Activated CD4-positive, alpha-beta memory T cell treated with anti-CD3 and anti-CD28 coated beads, Interleukin-2, amount 10 ng/mL, durations not matched to agents 7 days and 5 days (primary cell): ENCODE measurements at regions of chr6 and their contacts with region 1.

Region 1: DNA sequence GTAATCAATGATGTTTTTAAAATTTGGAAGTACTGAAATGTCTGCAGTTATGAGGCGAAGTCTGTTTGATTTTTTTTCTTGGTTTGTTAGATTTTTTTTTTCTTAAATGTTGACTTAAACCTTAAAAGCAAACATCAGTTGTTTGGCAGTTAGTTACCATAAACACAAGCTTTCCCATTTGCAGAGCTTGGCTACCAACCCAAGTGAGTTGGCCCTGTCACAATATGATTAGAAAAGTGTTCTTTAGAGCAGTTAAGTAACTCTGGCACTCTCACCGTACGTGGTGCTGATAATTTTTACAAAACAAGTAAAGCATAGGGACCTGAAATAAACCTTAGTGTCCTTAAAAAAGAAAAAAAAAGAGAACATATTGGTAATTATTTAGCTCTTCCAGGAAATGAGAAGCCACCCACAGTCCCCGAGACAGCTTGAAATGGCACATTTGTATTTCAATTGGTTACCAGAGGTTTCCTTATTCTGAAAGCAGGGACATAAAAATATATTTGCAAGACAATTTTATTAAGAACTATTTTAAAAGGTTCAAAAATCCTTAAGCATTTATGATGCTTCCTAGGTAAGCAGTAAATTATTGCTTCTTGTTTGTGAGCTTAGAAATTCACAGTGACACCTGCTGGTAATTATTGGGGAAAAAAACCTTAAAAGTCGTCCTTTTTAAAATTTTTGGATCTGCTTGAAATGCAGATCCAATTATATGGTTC is 3.9 kb downstream of the HEY2 start:
- DNase-seq: no peak
- H3K4me3 Mint-ChIP-seq: no peak overlapping the region
- H3K27ac Mint-ChIP-seq: no peak overlapping the region
- H3K4me1 Mint-ChIP-seq: peaks cover 18% of the 10 kb centered on the region
- H3K27me3 Mint-ChIP-seq: peaks cover 59% of the 10 kb centered on the region

Region 2: GRCh38 chr6:125314019-125314581 is 439.3 kb before region 1 on chr6:
- CTCF ChIA-PET with region 1: interaction called, 194 read pairs
- POLR2A ChIA-PET with region 1: no interaction called
- DNase-seq: peak; percentile 46
- H3K4me3 Mint-ChIP-seq: no peak overlapping the region
- H3K27ac Mint-ChIP-seq: no peak overlapping the region
- H3K4me1 Mint-ChIP-seq: no peaks in the 10 kb centered on the region
- H3K27me3 Mint-ChIP-seq: peaks cover 13% of the 10 kb centered on the region

Region 3: GRCh38 chr6:125534430-125535263 is 218.7 kb before region 1 on chr6:
- CTCF ChIA-PET with region 1: no interaction called
- POLR2A ChIA-PET with region 1: no interaction called
- DNase-seq: no peak
- H3K4me3 Mint-ChIP-seq: no peak overlapping the region
- H3K27ac Mint-ChIP-seq: no peak overlapping the region
- H3K4me1 Mint-ChIP-seq: no peaks in the 10 kb centered on the region
- H3K27me3 Mint-ChIP-seq: peaks cover 42% of the 10 kb centered on the region

Region 4: GRCh38 chr6:125558907-125559306 is 194.5 kb before region 1 on chr6:
- CTCF ChIA-PET with region 1: no interaction called
- POLR2A ChIA-PET with region 1: no interaction called
- DNase-seq: no peak
- H3K4me3 Mint-ChIP-seq: no peak overlapping the region
- H3K27ac Mint-ChIP-seq: no peak overlapping the region
- H3K4me1 Mint-ChIP-seq: no peaks in the 10 kb centered on the region
- H3K27me3 Mint-ChIP-seq: no peaks in the 10 kb centered on the region

Region 5: DNA sequence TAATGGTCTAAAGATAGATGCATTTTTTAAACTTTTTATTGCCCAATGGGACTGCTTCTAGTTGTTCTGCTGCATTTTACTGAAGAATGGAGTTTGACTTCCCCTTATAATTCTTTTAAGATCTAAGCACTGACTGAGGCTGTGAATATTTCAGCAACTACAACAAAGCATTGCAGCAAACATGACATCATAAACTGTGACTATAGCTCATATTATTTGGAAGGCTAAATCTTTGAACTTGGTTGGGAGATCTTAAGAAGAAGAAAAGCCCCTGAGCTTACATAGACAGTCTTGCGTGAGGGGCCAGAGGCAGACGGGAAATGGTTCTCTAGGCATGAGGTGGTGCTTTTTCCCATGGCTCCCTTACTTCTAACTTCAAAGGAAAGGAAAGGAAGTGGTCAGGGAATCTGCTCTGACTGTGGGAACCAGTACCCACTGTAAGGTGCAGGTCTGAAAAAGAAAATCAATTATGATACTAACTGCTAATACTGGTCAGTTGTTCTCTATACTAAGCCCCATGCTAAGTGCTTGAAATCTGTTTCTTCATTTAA is 10.8 kb after region 1 on chr6:
- CTCF ChIA-PET with region 1: interaction called, 11 read pairs
- POLR2A ChIA-PET with region 1: no interaction called
- DNase-seq: no peak
- H3K4me3 Mint-ChIP-seq: no peak overlapping the region
- H3K27ac Mint-ChIP-seq: no peak overlapping the region
- H3K4me1 Mint-ChIP-seq: no peaks in the 10 kb centered on the region
- H3K27me3 Mint-ChIP-seq: peaks cover 60% of the 10 kb centered on the region